PC-9 (cell line): ENCODE measurements at regions of chr4 and their contacts with region 1.

Region 1: DNA sequence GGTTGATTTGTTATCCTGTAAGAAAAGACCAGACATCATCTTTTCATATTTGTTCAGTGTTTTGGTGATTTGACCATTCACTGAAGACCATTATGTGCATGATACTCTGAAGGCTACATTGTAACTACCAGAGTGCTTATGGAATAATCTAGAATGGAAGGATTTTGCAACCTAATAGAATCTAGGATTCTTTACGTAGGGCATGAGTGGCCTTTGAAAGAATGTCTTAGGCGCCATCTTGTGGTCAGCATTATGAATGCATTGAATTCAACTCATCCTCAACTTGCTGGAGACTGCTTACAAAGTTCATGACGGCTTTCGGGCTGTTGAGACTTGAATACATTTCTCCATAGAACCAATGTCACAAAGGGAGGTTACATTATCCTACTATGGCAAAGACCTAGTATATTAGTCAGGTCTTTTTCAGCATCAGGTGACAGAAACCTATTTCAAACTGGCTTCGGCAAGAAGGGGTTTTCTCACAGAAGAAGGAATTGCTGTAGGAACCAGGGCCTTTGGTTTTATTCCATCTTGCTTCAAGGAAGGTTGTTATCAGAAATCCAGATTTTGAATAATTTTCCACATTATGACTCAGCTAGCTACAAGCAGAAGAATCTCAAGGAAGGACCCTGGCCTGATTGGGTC is 104.1 kb downstream of the GPAT3 start:
- DNase-seq: peak; percentile 36 to 56
- H3K4me3 ChIP-seq: no peak overlapping the region
- H3K27ac ChIP-seq: no peak overlapping the region
- H3K4me1 ChIP-seq: no peaks in the 10 kb centered on the region
- H3K27me3 ChIP-seq: no peaks in the 10 kb centered on the region
- CTCF ChIP-seq: peak; percentile 83

Region 2: GRCh38 chr4:83284193-83285054 is 355.5 kb before region 1 on chr4 and contains the start of gene COQ2:
- CTCF ChIA-PET with region 1: no interaction called
- POLR2A ChIA-PET with region 1: no interaction called
- intact Hi-C with region 1: loop called (anchors 5 kb)
- DNase-seq: peak; percentile 73 to 89
- H3K4me3 ChIP-seq: peak within 1 kb of the TSS; percentile 60
- H3K27ac ChIP-seq: peak within 1 kb of the TSS; percentile 27; the same call in 1 of the 2 replicates
- H3K4me1 ChIP-seq: peaks cover 24% of the 10 kb centered on the region
- H3K27me3 ChIP-seq: no peaks in the 10 kb centered on the region
- CTCF ChIP-seq: no peak
- total RNA-seq, gene COQ2: 16.5 and 19.5 TPM in 2 replicates

Region 3: DNA sequence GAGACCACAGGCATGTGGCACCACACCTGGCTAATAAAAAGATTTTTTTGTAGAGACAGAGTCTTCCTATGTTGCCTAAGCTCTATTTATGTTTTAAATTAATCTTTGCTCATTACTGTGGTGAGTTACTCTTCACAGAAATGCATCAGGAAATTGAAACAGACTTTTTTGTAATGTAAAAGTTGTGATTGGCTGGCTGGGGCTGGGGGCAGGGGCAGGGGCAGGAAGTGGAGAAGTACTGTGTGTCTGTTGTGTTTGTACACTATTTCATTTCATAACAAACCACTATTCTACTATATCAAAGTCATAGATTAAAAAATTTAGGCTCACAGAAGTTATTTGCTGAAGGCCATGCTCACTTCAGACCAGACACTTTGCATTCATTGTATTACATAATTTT is 136.0 kb before region 1 on chr4:
- CTCF ChIA-PET with region 1: interaction called, 3 read pairs
- POLR2A ChIA-PET with region 1: no interaction called
- intact Hi-C with region 1: loop called (anchors 1 kb)
- DNase-seq: no peak
- H3K4me3 ChIP-seq: no peak overlapping the region
- H3K27ac ChIP-seq: no peak overlapping the region
- H3K4me1 ChIP-seq: no peaks in the 10 kb centered on the region
- H3K27me3 ChIP-seq: no peaks in the 10 kb centered on the region
- CTCF ChIP-seq: no peak

Region 4: GRCh38 chr4:83961575-83961974 is 321.6 kb after region 1 on chr4:
- CTCF ChIA-PET with region 1: no interaction called
- POLR2A ChIA-PET with region 1: no interaction called
- intact Hi-C with region 1: loop called (anchors 1 kb)
- DNase-seq: peak in 1 of 2 experiments; percentile 0
- H3K4me3 ChIP-seq: no peak overlapping the region
- H3K27ac ChIP-seq: no peak overlapping the region
- H3K4me1 ChIP-seq: no peaks in the 10 kb centered on the region
- H3K27me3 ChIP-seq: no peaks in the 10 kb centered on the region
- CTCF ChIP-seq: peak; percentile 55; the same call in 1 of the 2 replicates

Region 5: GRCh38 chr4:84503495-84504437 is 863.8 kb after region 1 on chr4:
- CTCF ChIA-PET with region 1: no interaction called
- POLR2A ChIA-PET with region 1: no interaction called
- intact Hi-C with region 1: loop called (anchors 2 kb)
- DNase-seq: peak; percentile 19 to 36
- H3K4me3 ChIP-seq: no peak overlapping the region
- H3K27ac ChIP-seq: no peak overlapping the region
- H3K4me1 ChIP-seq: no peaks in the 10 kb centered on the region
- H3K27me3 ChIP-seq: no peaks in the 10 kb centered on the region
- CTCF ChIP-seq: peak; percentile 68